ENCODE measurements at regions of chr16 and their contacts with region 1.

Region 1: GRCh38 chr16:55283812-55284717 is 39.9 kb upstream of the IRX6 start:
- DNase-seq: no peak
- ATAC-seq: no peak
- H3K4me3 ChIP-seq: no peak overlapping the region
- H3K27ac ChIP-seq: no peak overlapping the region
- H3K4me1 ChIP-seq: no peaks in the 10 kb centered on the region
- H3K27me3 ChIP-seq: no peaks in the 10 kb centered on the region
- CTCF ChIP-seq: no peak

Region 2: GRCh38 chr16:55308973-55309372 is 24.9 kb after region 1 on chr16:
- intact Hi-C with region 1: no loop called
- DNase-seq: no peak
- ATAC-seq: no peak
- H3K4me3 ChIP-seq: no peak overlapping the region
- H3K27ac ChIP-seq: no peak overlapping the region
- H3K4me1 ChIP-seq: no peaks in the 10 kb centered on the region
- H3K27me3 ChIP-seq: peaks cover 2 to 8% (median 6%) of the 10 kb centered on the region in 3 donors
- CTCF ChIP-seq: no peak

Region 3: GRCh38 chr16:55349867-55350266 is 65.8 kb after region 1 on chr16:
- intact Hi-C with region 1: loop called in 1 of 2 experiments (anchors 10 kb)
- DNase-seq: no peak
- ATAC-seq: peak in 3 of 4 donors; percentile 14 to 37 (median 25)
- H3K4me3 ChIP-seq: no peak overlapping the region
- H3K27ac ChIP-seq: no peak overlapping the region
- H3K4me1 ChIP-seq: no peaks in the 10 kb centered on the region
- H3K27me3 ChIP-seq: peaks cover 0 to 3% (median 0%) of the 10 kb centered on the region in 3 donors
- CTCF ChIP-seq: no peak